Endothelial cell of umbilical vein (primary cell): ENCODE measurements at regions of chr3 and their contacts with region 1.

Region 1: GRCh38 chr3:116770815-116771450 is 61.4 kb downstream of the TUSC7 start:
- DNase-seq: peak; percentile 82
- H3K4me3 ChIP-seq: no peak overlapping the region
- H3K27ac ChIP-seq: no peak overlapping the region
- H3K4me1 ChIP-seq: no peaks in the 10 kb centered on the region
- H3K27me3 ChIP-seq: no peaks in the 10 kb centered on the region
- CTCF ChIP-seq: peak; percentile 86 to 98
- POLR2A ChIP-seq: no peak

Region 2: DNA sequence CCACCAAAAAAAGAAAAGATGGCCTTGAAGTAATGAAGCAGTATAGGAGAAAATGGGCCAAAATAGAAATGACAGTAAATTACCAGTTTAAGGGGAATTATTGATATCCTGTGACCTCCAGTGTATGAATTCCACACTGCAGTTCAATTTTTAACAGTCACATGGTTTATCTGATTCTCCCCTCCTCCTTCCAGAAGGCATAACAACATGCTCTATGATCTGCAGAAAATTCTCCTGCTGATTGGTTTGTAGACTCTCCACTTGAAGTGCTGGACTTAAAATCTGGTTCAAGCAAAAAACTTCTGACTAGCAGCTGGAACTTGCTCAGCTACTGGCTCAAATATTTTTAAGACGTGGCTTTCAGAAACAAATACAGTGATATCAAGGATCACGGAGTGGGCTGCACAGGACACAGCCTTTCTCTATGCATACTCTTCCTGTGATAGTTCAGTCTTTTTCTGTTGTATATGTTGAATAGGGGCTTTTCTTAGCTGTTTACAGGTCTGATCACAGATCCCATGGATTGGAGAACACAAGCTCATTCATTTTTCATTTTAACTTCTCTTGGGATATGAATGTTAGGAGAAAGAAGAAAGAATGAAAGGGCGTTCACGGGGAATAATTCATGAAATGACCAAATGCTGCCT is 537.1 kb before region 1 on chr3:
- CTCF ChIA-PET with region 1: no interaction called
- POLR2A ChIA-PET with region 1: no interaction called
- dilution Hi-C with region 1: no loop called
- intact Hi-C with region 1: no loop called
- DNase-seq: no peak
- H3K4me3 ChIP-seq: no peak overlapping the region
- H3K27ac ChIP-seq: no peak overlapping the region
- H3K4me1 ChIP-seq: no peaks in the 10 kb centered on the region
- H3K27me3 ChIP-seq: no peaks in the 10 kb centered on the region
- CTCF ChIP-seq: no peak
- POLR2A ChIP-seq: no peak

Region 3: DNA sequence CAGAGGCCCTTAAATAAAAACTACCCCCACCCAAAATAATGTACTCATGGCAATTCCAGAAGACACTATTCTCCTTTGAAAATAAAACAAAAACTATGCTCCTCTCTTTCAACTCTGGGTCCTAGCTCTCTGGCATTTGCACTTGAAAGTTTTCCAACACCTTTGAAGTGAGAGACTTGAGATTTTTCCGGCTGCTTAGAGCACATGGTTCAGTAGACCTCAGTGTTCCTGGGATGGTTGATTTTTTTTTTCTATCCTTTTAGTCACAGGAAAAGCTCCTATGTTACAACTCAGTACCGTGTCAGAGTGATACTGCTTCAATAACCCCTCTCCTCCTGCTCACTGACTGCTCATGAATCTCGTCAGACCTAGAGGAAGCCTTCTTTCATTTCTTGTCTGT is 179.7 kb before region 1 on chr3:
- CTCF ChIA-PET with region 1: no interaction called
- POLR2A ChIA-PET with region 1: no interaction called
- dilution Hi-C with region 1: no loop called
- intact Hi-C with region 1: no loop called
- DNase-seq: no peak
- H3K4me3 ChIP-seq: no peak overlapping the region
- H3K27ac ChIP-seq: no peak overlapping the region
- H3K4me1 ChIP-seq: no peaks in the 10 kb centered on the region
- H3K27me3 ChIP-seq: no peaks in the 10 kb centered on the region
- CTCF ChIP-seq: no peak
- POLR2A ChIP-seq: no peak

Region 4: DNA sequence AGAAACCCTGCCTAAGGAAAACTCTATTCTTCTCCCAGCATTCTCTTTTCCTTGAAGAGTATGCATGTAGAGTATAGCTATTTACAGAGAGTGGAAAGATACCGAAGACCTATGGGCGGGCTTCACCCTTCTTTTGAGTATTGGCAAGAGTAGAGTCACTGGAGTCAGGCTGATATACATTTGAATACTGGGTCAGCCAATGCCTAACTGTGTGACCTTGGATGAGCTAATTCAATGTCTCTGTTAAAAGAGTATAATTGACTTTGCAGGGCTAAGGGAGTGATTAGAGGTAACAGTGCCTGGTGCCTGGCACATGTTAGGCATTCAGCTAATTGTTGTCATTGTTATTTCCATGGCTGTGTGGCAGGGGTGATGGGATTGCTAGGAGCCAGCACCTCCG is 14.3 kb after region 1 on chr3:
- CTCF ChIA-PET with region 1: interaction called, 39 read pairs
- POLR2A ChIA-PET with region 1: no interaction called
- dilution Hi-C with region 1: no loop called
- intact Hi-C with region 1: no loop called
- DNase-seq: no peak
- H3K4me3 ChIP-seq: no peak overlapping the region
- H3K27ac ChIP-seq: no peak overlapping the region
- H3K4me1 ChIP-seq: no peaks in the 10 kb centered on the region
- H3K27me3 ChIP-seq: no peaks in the 10 kb centered on the region
- CTCF ChIP-seq: no peak
- POLR2A ChIP-seq: no peak

Region 5: GRCh38 chr3:116863822-116864589 is 93.1 kb after region 1 on chr3:
- CTCF ChIA-PET with region 1: interaction called, 24 read pairs
- POLR2A ChIA-PET with region 1: no interaction called
- dilution Hi-C with region 1: no loop called
- intact Hi-C with region 1: loop called (anchors 1 kb)
- DNase-seq: peak; percentile 79
- H3K4me3 ChIP-seq: peak overlapping the region; percentile 17 to 66 (median 28)
- H3K27ac ChIP-seq: no peak overlapping the region
- H3K4me1 ChIP-seq: peaks cover 3% of the 10 kb centered on the region
- H3K27me3 ChIP-seq: peaks cover 4% of the 10 kb centered on the region in 2 experiments
- CTCF ChIP-seq: peak; percentile 41 to 45
- POLR2A ChIP-seq: no peak

Region 6: DNA sequence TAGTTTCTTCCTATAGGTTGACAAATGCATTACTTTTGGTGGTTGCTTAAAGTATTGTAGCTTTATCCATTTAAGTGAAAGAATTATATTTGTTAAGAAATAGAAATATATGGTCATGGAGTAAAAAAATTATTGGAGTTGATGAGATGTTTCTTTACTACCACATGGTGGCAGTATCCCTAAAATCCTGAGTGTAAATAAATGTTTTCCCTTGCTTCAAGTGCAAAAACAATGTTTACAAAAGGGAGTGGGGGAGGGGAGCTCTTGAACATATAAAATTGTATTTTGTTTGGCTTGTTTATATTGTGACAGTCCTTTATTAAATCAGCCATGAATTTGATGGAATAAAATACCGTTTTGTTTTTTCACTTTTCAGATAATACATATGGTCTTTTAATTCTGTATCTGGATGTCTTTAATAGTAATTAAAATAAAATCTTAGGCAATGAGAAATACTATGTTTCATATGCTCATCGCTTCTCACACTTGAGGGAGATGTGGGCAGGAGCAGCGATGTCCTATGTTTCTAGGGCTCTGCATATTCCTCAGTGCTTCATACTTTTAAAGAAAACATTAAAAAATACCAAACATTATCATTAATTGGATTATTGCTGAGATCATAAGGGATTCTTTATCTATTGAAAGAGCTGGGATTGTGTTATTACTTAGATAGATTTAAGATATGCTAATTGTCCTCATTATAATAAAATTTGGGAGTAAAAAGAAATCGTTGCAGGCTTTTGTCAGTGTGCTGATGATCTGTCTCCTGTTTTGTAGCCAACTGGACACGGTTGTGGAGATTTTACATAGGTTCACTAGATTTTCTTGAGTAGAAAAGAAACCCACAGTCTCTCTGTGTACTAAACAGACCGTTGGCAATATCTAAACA is 288.4 kb after region 1 on chr3:
- CTCF ChIA-PET with region 1: interaction called, 10 read pairs
- POLR2A ChIA-PET with region 1: no interaction called
- dilution Hi-C with region 1: no loop called
- intact Hi-C with region 1: no loop called
- DNase-seq: peak; percentile 22
- H3K4me3 ChIP-seq: no peak overlapping the region
- H3K27ac ChIP-seq: no peak overlapping the region
- H3K4me1 ChIP-seq: no peaks in the 10 kb centered on the region
- H3K27me3 ChIP-seq: peaks cover 0 to 2% of the 10 kb centered on the region in 2 experiments
- CTCF ChIP-seq: peak; percentile 25 to 30
- POLR2A ChIP-seq: no peak

Region 7: GRCh38 chr3:117355566-117355965 is 584.6 kb after region 1 on chr3:
- CTCF ChIA-PET with region 1: interaction called, 10 read pairs
- POLR2A ChIA-PET with region 1: no interaction called
- dilution Hi-C with region 1: no loop called
- intact Hi-C with region 1: loop called (anchors 1 kb)
- DNase-seq: peak; percentile 45
- H3K4me3 ChIP-seq: no peak overlapping the region
- H3K27ac ChIP-seq: no peak overlapping the region
- H3K4me1 ChIP-seq: no peaks in the 10 kb centered on the region
- H3K27me3 ChIP-seq: no peaks in the 10 kb centered on the region
- CTCF ChIP-seq: peak; percentile 32 to 49
- POLR2A ChIP-seq: no peak

Region 8: DNA sequence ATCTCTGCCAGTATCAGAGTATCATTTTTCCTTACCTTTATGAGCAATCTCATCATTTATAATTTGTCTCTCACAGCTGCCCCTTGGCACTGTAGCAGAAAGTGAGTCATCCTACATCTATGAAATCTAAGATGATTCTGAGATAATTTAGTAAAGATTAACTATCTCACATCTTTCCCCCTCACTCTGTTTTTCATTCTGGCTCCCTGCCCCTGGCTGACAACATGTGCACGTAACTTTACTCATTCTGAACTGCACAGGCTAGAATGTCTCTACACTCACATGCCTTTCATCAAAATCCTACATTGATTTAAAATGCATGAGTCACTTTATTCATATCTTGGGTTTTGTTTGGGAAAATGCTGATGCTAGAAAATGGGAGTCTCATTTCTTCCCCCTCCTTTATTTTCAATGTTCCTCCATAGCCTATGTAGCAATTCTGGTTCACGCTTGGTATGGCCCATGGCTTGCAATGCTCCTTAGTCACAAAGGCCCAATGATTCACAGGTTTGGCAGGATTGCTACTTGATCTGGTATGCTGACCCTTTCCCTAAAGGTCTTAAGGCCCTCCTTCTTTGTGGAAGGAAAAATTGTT is 777.1 kb after region 1 on chr3:
- CTCF ChIA-PET with region 1: interaction called, 29 read pairs
- POLR2A ChIA-PET with region 1: no interaction called
- dilution Hi-C with region 1: no loop called
- intact Hi-C with region 1: no loop called
- DNase-seq: no peak
- H3K4me3 ChIP-seq: no peak overlapping the region
- H3K27ac ChIP-seq: no peak overlapping the region
- H3K4me1 ChIP-seq: no peaks in the 10 kb centered on the region
- H3K27me3 ChIP-seq: no peaks in the 10 kb centered on the region
- CTCF ChIP-seq: no peak
- POLR2A ChIP-seq: no peak

Region 9: DNA sequence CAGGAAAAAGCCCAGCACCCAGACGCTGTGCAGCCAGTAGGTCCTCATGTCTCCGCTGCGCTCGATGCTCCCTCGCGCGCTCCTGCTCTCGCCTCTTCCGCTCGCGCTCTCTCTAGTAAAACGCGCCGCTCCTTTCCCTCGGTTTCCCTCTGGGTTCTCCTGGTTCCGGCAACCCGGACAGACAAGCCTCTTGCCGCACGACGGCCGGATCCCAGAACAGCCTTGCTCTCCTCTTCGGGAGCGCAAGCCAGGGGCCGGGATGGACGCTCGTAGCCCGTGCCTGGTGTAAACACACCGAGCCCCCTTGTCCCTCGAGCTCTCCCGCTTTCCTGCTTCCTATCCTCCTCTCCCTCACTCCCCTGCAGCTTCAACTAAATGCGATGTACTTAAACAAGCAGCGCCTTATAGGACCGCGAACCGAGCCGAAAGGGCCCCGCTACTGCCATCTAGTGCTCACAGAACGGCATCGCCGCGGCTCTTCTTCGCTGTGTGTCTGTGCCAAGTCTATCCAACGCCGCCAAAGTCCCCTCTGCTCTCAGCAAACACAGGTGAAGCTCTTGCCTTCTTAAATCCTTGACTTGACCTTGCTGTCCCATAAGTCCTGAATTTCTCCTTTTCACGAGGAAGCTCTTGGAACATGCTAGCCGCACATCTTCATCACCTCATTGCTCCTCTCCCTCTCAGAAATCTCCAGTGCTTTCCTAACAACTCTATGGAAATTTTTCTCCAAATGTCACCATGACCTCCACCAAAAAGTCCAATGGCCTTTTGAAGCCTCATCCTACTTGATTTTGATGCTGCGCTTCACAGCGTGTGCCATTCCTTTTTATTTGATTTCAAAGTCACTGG is 1226.5 kb after region 1 on chr3:
- CTCF ChIA-PET with region 1: interaction called, 50 read pairs
- POLR2A ChIA-PET with region 1: no interaction called
- dilution Hi-C with region 1: no loop called
- intact Hi-C with region 1: loop called (anchors 1 kb)
- DNase-seq: peak; percentile 84
- H3K4me3 ChIP-seq: peak overlapping the region in 2 of 3 experiments; percentile 32 to 44
- H3K27ac ChIP-seq: no peak overlapping the region
- H3K4me1 ChIP-seq: peaks cover 4% of the 10 kb centered on the region
- H3K27me3 ChIP-seq: peaks cover 9 to 11% of the 10 kb centered on the region in 2 experiments
- CTCF ChIP-seq: peak; percentile 84 to 97
- POLR2A ChIP-seq: no peak